ENCODE measurements at regions of chr1 and their contacts with region 1.

Region 1: GRCh38 chr1:62386351-62387121 is 50.3 kb upstream of the USP1 start:
- DNase-seq: peak; percentile 63 to 72
- H3K4me3 ChIP-seq: no peak overlapping the region
- H3K4me3 Mint-ChIP-seq: no peak overlapping the region
- H3K27ac Mint-ChIP-seq: peak overlapping the region; percentile 63
- H3K4me1 ChIP-seq: peaks cover 39% of the 10 kb centered on the region
- H3K4me1 Mint-ChIP-seq: peaks cover 11% of the 10 kb centered on the region
- H3K27me3 ChIP-seq: no peaks in the 10 kb centered on the region
- H3K27me3 Mint-ChIP-seq: no peaks in the 10 kb centered on the region
- CTCF ChIP-seq: no peak

Region 2: DNA sequence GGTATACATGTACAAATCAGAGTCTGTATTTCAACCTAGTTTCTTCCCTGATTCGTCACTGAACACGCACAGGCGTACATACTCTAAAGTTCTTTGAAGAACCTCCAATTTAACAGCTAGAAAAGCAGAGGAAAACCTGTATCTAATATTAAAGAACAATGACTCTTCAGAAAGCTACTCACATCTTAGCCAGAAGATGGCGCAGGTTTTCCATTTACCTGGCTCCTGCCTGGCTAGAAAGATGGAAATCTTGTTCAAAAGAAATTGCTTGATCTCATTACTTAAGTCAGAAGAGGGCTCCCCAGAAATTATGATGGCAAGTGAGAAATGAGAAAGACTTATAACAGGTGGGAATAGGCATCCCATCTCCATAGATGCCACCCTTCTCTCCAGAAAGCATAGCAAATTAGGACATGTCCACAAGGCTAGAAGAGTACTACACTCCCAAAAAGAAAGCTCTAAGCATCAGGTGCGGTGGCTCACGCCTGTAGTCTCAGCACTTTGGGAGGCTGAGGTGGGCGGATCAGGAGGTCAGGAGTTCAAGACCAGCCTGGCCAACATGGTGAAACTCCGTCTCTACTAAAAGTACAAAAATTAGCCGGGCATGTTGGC is 210.9 kb before region 1 on chr1:
- CTCF ChIA-PET with region 1: interaction called, 3 read pairs
- POLR2A ChIA-PET with region 1: no interaction called
- intact Hi-C with region 1: loop called (anchors 1 kb)
- DNase-seq: peak in 1 of 2 experiments; percentile 53
- H3K4me3 ChIP-seq: no peak overlapping the region
- H3K4me3 Mint-ChIP-seq: no peak overlapping the region
- H3K27ac Mint-ChIP-seq: no peak overlapping the region
- H3K4me1 ChIP-seq: no peaks in the 10 kb centered on the region
- H3K4me1 Mint-ChIP-seq: peaks cover 13% of the 10 kb centered on the region
- H3K27me3 ChIP-seq: no peaks in the 10 kb centered on the region
- H3K27me3 Mint-ChIP-seq: no peaks in the 10 kb centered on the region
- CTCF ChIP-seq: peak; percentile 65

Region 3: GRCh38 chr1:62237361-62237760 is 149.2 kb before region 1 on chr1:
- CTCF ChIA-PET with region 1: no interaction called
- POLR2A ChIA-PET with region 1: interaction called, 3 read pairs
- intact Hi-C with region 1: loop called (anchors 1 kb)
- DNase-seq: no peak
- H3K4me3 ChIP-seq: no peak overlapping the region
- H3K4me3 Mint-ChIP-seq: no peak overlapping the region
- H3K27ac Mint-ChIP-seq: peak overlapping the region; percentile 88
- H3K4me1 ChIP-seq: peaks cover 32% of the 10 kb centered on the region
- H3K4me1 Mint-ChIP-seq: peaks cover 43% of the 10 kb centered on the region
- H3K27me3 ChIP-seq: no peaks in the 10 kb centered on the region
- H3K27me3 Mint-ChIP-seq: no peaks in the 10 kb centered on the region
- CTCF ChIP-seq: no peak

Region 4: DNA sequence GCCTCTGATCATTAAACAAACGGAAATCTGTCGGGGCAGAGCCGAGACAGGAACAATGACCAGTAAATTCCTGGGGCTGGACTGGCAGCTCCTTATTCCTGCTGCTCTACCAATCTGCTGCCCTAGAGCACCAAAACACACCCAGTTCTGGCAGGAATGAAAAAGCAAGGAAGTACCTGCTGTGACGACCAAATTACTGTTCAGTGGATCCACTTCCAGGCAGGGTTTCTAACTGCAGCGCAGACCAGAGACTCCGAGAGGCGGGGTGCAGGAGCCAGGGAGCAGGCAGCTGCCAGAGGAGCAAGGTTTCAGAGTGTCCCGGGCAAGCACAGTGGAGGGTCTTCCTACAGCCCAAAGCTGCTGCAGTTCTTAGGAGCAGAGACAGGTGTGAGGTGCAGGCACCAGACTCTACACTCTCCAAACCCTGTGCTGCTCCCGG is 99.7 kb before region 1 on chr1:
- CTCF ChIA-PET with region 1: no interaction called
- POLR2A ChIA-PET with region 1: interaction called, 5 read pairs
- intact Hi-C with region 1: loop called (anchors 1 kb)
- DNase-seq: peak; percentile 73 to 84
- H3K4me3 ChIP-seq: peak overlapping the region; percentile 9
- H3K4me3 Mint-ChIP-seq: peak overlapping the region; percentile 68
- H3K27ac Mint-ChIP-seq: peak overlapping the region; percentile 80
- H3K4me1 ChIP-seq: peaks cover 50% of the 10 kb centered on the region
- H3K4me1 Mint-ChIP-seq: peaks cover 55% of the 10 kb centered on the region
- H3K27me3 ChIP-seq: no peaks in the 10 kb centered on the region
- H3K27me3 Mint-ChIP-seq: no peaks in the 10 kb centered on the region
- CTCF ChIP-seq: no peak

Region 5: DNA sequence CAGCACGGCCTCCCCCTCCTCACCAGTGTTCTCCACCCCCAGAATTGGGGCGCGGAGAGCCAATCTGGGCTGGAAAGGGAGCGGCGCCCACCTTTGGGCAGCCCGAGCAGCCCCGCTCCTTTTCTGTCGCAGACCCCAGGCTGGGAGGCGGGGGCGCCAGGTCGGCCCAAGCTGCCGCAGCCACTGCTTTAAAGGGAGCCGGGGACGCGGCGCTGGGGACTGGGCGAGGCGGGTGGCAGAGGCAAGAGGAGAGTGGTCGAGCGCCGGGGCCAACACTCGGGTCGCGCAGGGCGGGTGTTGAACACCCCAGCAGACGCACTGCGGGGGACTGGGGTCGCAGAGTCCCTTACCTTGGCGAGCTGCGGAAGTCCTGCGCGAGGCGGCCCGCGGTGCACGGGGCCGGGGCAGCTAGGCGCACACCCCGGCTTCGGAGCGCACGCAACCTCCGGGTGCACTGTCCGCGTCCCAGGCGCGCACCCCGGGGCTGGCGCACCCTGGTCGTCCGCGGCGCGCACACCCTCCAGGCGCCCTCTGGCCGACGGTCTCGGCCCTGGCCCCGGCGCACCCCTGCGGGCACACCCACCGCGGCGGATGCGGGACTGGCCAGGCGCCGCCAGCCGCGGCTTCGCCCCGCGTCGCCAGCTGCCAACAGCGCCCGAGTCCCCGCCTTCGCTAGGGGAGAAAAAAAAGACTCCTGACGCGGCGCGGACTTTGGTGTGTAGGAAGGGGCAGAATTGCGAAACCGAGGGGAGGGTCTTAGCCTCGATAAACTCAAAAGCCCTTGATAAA is 67.6 kb before region 1 on chr1 and contains the start of gene KANK4:
- CTCF ChIA-PET with region 1: interaction called, 3 read pairs
- POLR2A ChIA-PET with region 1: no interaction called
- intact Hi-C with region 1: loop called (anchors 2 kb)
- DNase-seq: peak; percentile 70 to 75
- H3K4me3 ChIP-seq: peak within 1 kb of the TSS; percentile 85
- H3K4me3 Mint-ChIP-seq: peak within 1 kb of the TSS; percentile 81
- H3K27ac Mint-ChIP-seq: peak within 1 kb of the TSS; percentile 85
- H3K4me1 ChIP-seq: peaks cover 3% of the 10 kb centered on the region; the same call in 1 of the 2 replicates
- H3K4me1 Mint-ChIP-seq: peaks cover 10% of the 10 kb centered on the region
- H3K27me3 ChIP-seq: no peaks in the 10 kb centered on the region
- H3K27me3 Mint-ChIP-seq: no peaks in the 10 kb centered on the region
- CTCF ChIP-seq: no peak
- total RNA-seq, gene KANK4: 18.9 and 21.5 TPM in 2 replicates

Region 6: DNA sequence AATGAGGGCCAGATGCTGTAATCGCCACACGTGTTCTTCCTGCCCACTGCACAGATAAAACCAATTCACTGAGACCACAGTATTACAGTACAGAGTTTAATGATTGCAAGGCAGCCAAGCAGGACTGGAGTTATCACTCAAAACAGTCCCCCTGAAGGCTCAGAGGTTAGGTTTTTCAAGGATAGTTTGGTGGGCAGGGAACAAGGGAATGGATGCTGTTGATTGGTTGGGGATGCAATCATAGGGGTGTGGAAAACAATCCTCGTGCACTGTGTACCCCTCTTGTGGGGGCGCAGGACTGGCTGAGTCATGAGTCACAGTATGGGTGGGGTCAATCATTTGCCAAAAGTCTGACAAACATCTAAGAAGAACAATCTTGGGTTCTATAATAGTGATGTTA is 37.9 kb after region 1 on chr1:
- CTCF ChIA-PET with region 1: no interaction called
- POLR2A ChIA-PET with region 1: no interaction called
- intact Hi-C with region 1: loop called (anchors 1 kb)
- DNase-seq: peak in 1 of 2 experiments; percentile 45
- H3K4me3 ChIP-seq: no peak overlapping the region
- H3K4me3 Mint-ChIP-seq: no peak overlapping the region
- H3K27ac Mint-ChIP-seq: peak overlapping the region; percentile 78
- H3K4me1 ChIP-seq: peaks cover 17% of the 10 kb centered on the region
- H3K4me1 Mint-ChIP-seq: peaks cover 12% of the 10 kb centered on the region
- H3K27me3 ChIP-seq: no peaks in the 10 kb centered on the region
- H3K27me3 Mint-ChIP-seq: no peaks in the 10 kb centered on the region
- CTCF ChIP-seq: no peak

Region 7: DNA sequence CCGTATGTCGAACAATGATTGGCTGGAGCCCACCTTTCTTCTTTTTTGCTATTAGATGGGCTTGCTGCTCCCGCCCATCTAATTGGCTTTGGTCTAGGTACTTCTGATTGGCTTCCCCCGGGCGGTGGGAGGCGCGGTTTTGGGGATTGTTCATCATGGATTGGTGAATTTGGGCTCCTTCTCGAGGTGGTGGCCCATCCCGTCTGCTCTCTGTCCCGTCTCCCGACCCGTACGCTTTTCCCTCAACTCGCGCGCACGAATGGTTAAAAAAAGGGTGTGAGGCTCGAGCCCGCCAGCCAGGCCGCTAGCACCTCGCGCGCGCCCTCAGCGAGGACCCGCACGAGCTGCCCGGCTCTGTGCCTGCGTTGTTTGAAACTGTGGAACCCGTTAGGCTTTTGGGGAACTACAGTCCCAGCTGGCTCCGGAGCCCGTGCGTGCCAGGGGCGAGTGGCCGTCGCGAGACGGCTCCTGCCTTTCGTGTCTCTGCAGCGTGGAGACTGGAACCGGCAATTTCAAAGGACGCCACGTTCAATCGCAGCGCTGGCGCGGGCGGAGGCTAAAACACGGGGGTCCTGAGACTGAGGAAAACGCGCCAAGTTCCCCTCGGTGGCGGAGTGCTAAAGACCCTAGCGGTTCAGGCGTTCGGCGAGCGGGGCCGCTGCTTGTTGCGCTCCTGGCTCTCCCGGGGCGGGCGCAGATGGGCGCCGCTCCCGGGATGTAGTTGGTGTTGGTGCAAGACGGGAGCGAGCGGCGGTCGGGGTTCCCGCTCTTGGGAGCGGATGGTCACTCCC is 50.1 kb after region 1 on chr1 and contains the start of gene USP1:
- CTCF ChIA-PET with region 1: no interaction called
- POLR2A ChIA-PET with region 1: no interaction called
- intact Hi-C with region 1: loop called (anchors 1 kb)
- DNase-seq: peak; percentile 96 to 99
- H3K4me3 ChIP-seq: peak within 1 kb of the TSS; percentile 83
- H3K4me3 Mint-ChIP-seq: peak within 1 kb of the TSS; percentile 71
- H3K27ac Mint-ChIP-seq: peak within 1 kb of the TSS; percentile 92
- H3K4me1 ChIP-seq: no peaks in the 10 kb centered on the region; the same call in none of the 2 replicates
- H3K4me1 Mint-ChIP-seq: peaks cover 8% of the 10 kb centered on the region
- H3K27me3 ChIP-seq: no peaks in the 10 kb centered on the region
- H3K27me3 Mint-ChIP-seq: no peaks in the 10 kb centered on the region
- CTCF ChIP-seq: no peak
- total RNA-seq, gene USP1: 35.0 and 39.3 TPM in 2 replicates

Region 8: DNA sequence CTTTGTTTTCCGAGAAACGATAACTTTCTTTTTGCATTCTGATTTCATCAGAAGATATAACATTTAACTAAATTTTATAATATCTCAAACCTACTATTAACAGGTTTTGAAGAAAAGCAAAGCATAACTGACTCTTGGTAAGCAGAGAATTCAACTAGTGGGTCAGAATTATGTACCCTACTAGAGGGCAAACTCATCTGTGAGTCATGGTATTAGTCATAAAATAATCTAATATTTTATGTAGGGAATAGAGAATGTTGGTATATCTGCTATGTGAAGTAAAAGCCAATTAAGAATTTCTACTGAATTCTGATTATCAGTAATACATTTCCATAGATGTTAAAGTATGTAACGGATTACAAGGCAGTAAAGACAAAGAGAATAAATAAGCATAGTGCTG is 107.1 kb after region 1 on chr1:
- CTCF ChIA-PET with region 1: no interaction called
- POLR2A ChIA-PET with region 1: no interaction called
- intact Hi-C with region 1: no loop called
- DNase-seq: no peak
- H3K4me3 ChIP-seq: no peak overlapping the region
- H3K4me3 Mint-ChIP-seq: no peak overlapping the region
- H3K27ac Mint-ChIP-seq: no peak overlapping the region
- H3K4me1 ChIP-seq: no peaks in the 10 kb centered on the region
- H3K4me1 Mint-ChIP-seq: no peaks in the 10 kb centered on the region
- H3K27me3 ChIP-seq: no peaks in the 10 kb centered on the region
- H3K27me3 Mint-ChIP-seq: no peaks in the 10 kb centered on the region
- CTCF ChIP-seq: no peak